ENCODE measurements at regions of chr14 and their contacts with region 1.

Region 1: DNA sequence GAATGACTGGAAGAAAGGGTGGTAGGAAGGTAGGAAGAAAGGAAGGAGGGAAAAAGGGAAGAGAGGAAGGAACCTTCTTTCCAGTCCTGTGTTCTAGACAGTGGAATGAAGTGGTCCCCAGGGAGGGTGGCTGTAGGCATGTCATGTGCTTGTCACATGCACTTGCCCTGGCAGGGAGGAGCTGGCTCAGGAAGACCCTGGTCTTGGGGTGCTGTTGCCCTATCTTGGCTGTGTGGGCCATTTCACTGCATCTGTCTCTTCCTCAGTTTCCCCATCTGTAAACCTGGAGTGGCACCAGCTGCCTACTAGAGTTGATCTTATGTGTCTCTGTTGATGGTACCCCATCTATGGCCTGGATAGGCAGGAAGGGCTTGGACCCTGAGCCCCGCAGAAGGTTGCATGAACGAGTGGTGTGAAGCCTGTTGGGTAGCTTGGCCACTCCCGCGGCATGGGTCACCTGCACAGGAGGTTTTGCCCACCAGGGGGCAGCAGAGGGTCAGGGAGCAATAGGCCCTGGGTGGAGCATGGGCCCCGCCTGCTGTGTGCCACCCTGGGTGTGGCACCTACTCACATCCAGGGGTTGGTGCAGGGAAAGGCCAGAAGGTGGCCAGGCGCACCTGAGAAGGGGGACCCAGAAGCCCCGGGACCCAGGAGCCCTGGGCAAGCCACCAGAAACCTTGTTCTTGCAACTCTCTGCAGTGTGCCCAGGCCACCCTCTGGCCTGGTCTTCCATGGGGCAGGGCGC is 25.1 kb downstream of the MEG3 start:
- DNase-seq: peak; percentile 68 to 97 (median 86)
- ATAC-seq: peak; percentile 89 to 95 (median 92)
- H3K4me3 ChIP-seq: no peak overlapping the region
- H3K27ac ChIP-seq: no peak overlapping the region
- H3K4me1 ChIP-seq: no peaks in the 10 kb centered on the region
- H3K27me3 ChIP-seq: no peaks in the 10 kb centered on the region
- CTCF ChIP-seq: peak; percentile 79 to 89 (median 88)

Region 2: GRCh38 chr14:101230161-101230850 is 379.3 kb after region 1 on chr14:
- intact Hi-C with region 1: loop called in 1 of 3 experiments (anchors 5 kb)
- DNase-seq: no peak
- ATAC-seq: no peak
- H3K4me3 ChIP-seq: no peak overlapping the region
- H3K27ac ChIP-seq: no peak overlapping the region
- H3K4me1 ChIP-seq: no peaks in the 10 kb centered on the region
- H3K27me3 ChIP-seq: no peaks in the 10 kb centered on the region
- CTCF ChIP-seq: no peak

Region 3: DNA sequence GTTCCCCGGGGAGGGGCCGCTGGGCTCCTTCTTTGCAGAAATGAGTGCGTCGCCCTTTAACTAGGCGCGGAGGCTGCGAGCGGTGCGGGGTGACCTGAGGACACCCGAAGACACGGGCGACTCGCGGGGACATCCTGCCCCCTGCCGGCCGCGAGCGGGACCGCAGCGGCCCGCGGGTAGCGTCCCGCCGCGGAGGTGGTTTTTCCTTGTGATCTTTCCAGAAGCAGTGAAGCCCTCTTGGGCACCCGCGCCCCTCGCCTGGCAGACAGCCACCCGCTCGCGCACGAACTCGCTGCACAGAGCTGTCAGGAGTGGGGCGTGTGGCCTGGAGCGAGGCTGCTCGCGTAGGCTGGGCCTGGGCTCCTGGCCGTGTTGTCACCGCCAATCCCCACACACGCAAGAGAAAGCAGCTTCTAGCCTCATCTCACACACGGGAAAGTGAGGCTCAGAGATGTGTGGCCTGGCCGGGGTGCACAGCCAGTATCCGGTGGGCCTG is 777.5 kb after region 1 on chr14:
- intact Hi-C with region 1: loop called in 1 of 3 experiments (anchors 10 kb)
- DNase-seq: peak; percentile 56 to 93 (median 81)
- ATAC-seq: peak; percentile 96 to 100 (median 98)
- H3K4me3 ChIP-seq: peak overlapping the region in 1 of 4 donors; percentile 8
- H3K27ac ChIP-seq: no peak overlapping the region
- H3K4me1 ChIP-seq: peaks cover 0 to 4% (median 0%) of the 10 kb centered on the region in 3 donors
- H3K27me3 ChIP-seq: no peaks in the 10 kb centered on the region
- CTCF ChIP-seq: peak; percentile 99 to 100 (median 99)